MCF 10A (cell line): ENCODE measurements at regions of chr10 and their contacts with region 1.

Region 1: DNA sequence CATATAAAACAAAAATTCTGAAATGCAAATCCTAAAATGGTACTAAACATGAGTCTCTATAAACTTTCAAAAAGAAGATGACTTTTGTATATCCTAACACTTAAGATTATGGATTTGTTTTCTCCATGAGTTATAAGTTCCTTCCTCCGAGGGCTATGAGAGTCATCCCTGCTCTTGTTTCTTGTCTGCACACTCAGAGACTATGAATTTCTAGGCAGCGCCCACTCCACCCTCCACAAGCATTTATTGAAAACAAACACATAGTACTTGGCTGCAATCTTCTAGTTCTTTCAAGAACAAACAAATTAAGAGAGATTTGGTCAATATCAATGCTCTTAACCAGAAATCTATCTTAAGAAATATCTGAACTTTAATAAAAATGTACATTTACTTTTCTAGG is 211.7 kb downstream of the DKK1 start:
- DNase-seq: peak; percentile 34
- H3K4me3 Mint-ChIP-seq: no peak overlapping the region
- H3K27ac Mint-ChIP-seq: peak overlapping the region; percentile 86
- H3K4me1 Mint-ChIP-seq: peaks cover 25% of the 10 kb centered on the region
- H3K27me3 Mint-ChIP-seq: no peaks in the 10 kb centered on the region
- CTCF ChIP-seq: no peak

Region 2: GRCh38 chr10:52566471-52567246 is 40.9 kb after region 1 on chr10:
- CTCF ChIA-PET with region 1: interaction called, 10 read pairs
- POLR2A ChIA-PET with region 1: no interaction called
- intact Hi-C with region 1: no loop called
- DNase-seq: peak; percentile 77
- H3K4me3 Mint-ChIP-seq: no peak overlapping the region
- H3K27ac Mint-ChIP-seq: peak overlapping the region; percentile 14
- H3K4me1 Mint-ChIP-seq: peaks cover 20% of the 10 kb centered on the region
- H3K27me3 Mint-ChIP-seq: no peaks in the 10 kb centered on the region
- CTCF ChIP-seq: peak; percentile 51